Naive thymus-derived CD4-positive, alpha-beta T cell (primary cell): ENCODE measurements at regions of chr16 and their contacts with region 1.

Region 1: DNA sequence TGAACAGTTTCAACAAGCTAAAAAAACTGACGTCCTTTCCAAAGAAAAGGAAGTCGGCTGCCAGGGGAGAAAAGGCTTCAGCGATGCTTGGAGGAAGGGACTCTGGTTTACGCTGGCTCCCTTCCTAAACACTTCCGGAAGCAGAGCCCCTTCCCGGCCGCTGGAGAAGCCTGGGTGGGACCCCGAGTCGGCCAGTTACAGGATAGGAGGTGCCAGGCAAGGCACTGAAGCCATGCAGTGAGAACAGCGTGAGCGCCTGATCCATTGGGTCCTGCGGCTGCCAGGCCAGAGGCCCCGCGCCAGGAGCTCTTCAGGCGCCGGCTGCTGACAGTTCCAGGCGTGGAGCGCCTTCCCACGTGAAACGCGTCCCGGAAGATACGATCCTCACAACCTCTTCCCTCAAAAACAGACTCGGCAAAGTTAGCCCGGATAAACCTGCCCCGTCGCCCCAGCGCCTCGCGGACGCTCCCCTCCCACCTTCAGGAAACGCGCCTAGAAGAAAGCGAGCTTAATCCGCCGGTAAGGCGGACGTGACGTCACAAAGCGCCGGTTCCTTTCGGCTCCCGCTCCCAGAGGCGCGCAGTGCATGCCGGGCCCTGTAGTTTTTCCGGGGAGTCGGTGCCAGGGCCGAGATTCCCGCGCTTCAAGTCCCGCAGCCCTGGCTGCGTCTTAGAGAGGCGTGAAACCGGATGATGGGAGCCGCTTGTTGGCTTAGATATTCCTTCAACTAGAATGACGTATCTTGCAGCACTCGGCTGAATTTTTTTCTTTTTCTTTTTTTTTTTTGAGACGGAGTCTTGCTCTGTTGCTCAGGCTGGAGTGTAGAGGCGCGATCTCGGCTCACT is at the start of gene ADAT1:
- DNase-seq: peak; percentile 91 to 99 (median 97)
- ATAC-seq: peak; percentile 97
- H3K4me3 ChIP-seq: peak within 1 kb of the TSS; percentile 80
- H3K4me3 Mint-ChIP-seq: peak within 1 kb of the TSS; percentile 91 to 99 (median 96)
- H3K27ac ChIP-seq: peak within 1 kb of the TSS; percentile 93
- H3K27ac Mint-ChIP-seq: peak within 1 kb of the TSS; percentile 92 to 99 (median 97)
- H3K4me1 ChIP-seq: peaks cover 30 to 49% of the 10 kb centered on the region in 2 donors
- H3K4me1 Mint-ChIP-seq: peaks cover 29 to 76% (median 52%) of the 10 kb centered on the region in 7 donors
- H3K27me3 ChIP-seq: no peaks in the 10 kb centered on the region
- H3K27me3 Mint-ChIP-seq: no peaks in the 10 kb centered on the region
- total RNA-seq, gene ADAT1: 41.3 to 69.4 (median 63.6) TPM

Region 2: GRCh38 chr16:74296432-74297144 is 1326.4 kb before region 1 on chr16 and contains the start of gene PSMD7:
- CTCF ChIA-PET with region 1: no interaction called
- POLR2A ChIA-PET with region 1: no interaction called
- intact Hi-C with region 1: loop called in 1 of 2 experiments (anchors 5 kb)
- DNase-seq: peak; percentile 82 to 93 (median 90)
- ATAC-seq: peak; percentile 96
- H3K4me3 ChIP-seq: peak within 1 kb of the TSS; percentile 86
- H3K4me3 Mint-ChIP-seq: peak within 1 kb of the TSS; percentile 89 to 99 (median 96)
- H3K27ac ChIP-seq: peak within 1 kb of the TSS; percentile 96
- H3K27ac Mint-ChIP-seq: peak within 1 kb of the TSS; percentile 93 to 100 (median 98)
- H3K4me1 ChIP-seq: peaks cover 22 to 25% of the 10 kb centered on the region in 2 donors
- H3K4me1 Mint-ChIP-seq: peaks cover 21 to 52% (median 38%) of the 10 kb centered on the region in 7 donors
- H3K27me3 ChIP-seq: no peaks in the 10 kb centered on the region
- H3K27me3 Mint-ChIP-seq: no peaks in the 10 kb centered on the region
- total RNA-seq, gene PSMD7: 61.1 to 107 (median 71.3) TPM

Region 3: DNA sequence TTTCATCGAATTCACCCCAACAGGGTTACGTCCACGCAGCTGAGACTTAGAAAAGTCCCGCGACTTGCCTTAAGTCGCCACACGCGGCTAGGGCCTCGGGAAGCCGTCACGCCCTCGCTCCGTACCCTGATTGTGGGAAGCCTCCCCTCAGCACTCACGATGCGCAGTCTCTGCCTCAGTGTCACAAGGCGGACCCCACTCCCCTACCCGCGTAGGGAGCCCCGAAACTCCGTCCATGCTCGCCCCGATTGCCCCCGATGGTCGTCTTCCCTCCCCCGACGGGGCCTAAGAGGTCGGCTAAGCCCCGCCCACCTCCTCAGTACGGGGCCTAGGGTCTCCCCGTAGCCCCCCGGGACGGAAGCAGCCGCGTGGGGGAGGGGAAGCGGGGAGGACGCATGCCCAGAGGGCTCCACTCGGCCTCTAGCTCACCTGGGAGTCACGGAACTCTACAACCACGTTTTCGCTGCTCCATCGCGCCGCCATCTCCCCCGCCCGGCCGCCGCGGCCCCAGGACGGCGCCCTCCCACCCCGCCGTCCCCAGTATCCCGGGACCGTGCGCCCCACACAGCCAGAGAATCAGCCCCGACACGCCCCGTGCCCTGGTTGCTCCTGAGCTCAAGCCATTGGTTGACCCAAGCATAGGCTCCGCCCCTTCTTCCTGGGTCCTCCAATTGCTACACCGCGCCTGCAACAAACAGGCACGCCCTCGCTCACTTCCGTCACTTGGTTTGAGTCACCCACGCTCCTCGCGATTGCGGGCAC is 638.3 kb before region 1 on chr16 and contains the start of gene WDR59:
- CTCF ChIA-PET with region 1: no interaction called
- POLR2A ChIA-PET with region 1: no interaction called
- intact Hi-C with region 1: loop called (anchors 1 to 10 kb)
- DNase-seq: peak; percentile 87 to 99 (median 98)
- ATAC-seq: peak; percentile 100
- H3K4me3 ChIP-seq: peak within 1 kb of the TSS; percentile 98
- H3K4me3 Mint-ChIP-seq: peak within 1 kb of the TSS; percentile 90 to 98 (median 95)
- H3K27ac ChIP-seq: peak within 1 kb of the TSS; percentile 86
- H3K27ac Mint-ChIP-seq: peak within 1 kb of the TSS; percentile 72 to 96 (median 92)
- H3K4me1 ChIP-seq: peaks cover 5 to 6% of the 10 kb centered on the region in 2 donors
- H3K4me1 Mint-ChIP-seq: peaks cover 0 to 27% (median 23%) of the 10 kb centered on the region in 7 donors
- H3K27me3 ChIP-seq: no peaks in the 10 kb centered on the region
- H3K27me3 Mint-ChIP-seq: no peaks in the 10 kb centered on the region
- total RNA-seq, gene WDR59: 82.7 to 130 (median 84.7) TPM

Region 4: GRCh38 chr16:75471723-75472633 is 151.0 kb before region 1 on chr16:
- CTCF ChIA-PET with region 1: no interaction called
- POLR2A ChIA-PET with region 1: no interaction called
- intact Hi-C with region 1: loop called in 1 of 2 experiments (anchors 1 kb)
- DNase-seq: peak in 6 of 9 donors; percentile 15 to 48 (median 38)
- ATAC-seq: peak; percentile 91
- H3K4me3 ChIP-seq: no peak overlapping the region
- H3K4me3 Mint-ChIP-seq: no peak overlapping the region
- H3K27ac ChIP-seq: no peak overlapping the region
- H3K27ac Mint-ChIP-seq: peak overlapping the region in 1 of 9 donors; percentile 81
- H3K4me1 ChIP-seq: no peaks in the 10 kb centered on the region
- H3K4me1 Mint-ChIP-seq: peaks cover 0 to 6% (median 4%) of the 10 kb centered on the region in 7 donors
- H3K27me3 ChIP-seq: no peaks in the 10 kb centered on the region
- H3K27me3 Mint-ChIP-seq: peaks cover 0 to 5% (median 0%) of the 10 kb centered on the region in 5 donors

Region 5: DNA sequence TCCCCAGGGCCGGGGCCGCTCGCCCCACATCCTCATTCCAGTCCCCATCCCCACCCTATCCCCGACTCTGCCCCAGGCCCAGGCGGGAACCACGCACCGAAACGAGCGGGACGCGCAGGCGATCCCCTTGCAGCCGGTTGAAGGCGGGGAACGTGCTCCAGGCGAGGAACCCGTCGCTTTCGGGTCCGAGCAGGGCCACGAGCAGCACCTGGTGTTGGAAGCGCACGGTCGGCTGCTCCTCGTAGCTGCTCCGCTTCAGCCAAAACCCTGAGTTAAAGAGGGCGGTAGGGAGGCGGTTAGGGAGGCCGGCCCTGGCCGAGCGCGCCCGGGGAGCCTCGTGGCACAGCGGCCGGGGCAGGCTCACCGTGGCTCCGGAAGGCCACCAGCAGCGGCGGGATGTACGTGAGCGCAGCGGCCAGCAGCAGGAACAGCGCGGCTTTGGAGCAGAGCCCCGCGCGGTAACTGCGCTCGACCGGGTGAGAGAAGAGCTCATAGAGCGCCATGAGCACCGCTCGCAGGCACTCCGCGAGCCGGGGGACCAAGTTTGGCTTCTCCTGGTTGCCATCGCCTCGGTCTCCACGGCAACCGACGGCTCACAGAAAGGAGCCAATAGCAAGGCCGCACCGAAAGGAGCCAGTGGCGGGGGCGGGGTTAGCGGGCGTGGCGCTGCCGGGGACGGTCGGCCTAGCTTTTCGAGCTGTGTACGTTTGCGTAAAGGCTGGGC is 67.1 kb before region 1 on chr16 and contains the start of gene TMEM231:
- CTCF ChIA-PET with region 1: no interaction called
- POLR2A ChIA-PET with region 1: interaction called, 10 read pairs
- intact Hi-C with region 1: loop called (anchors 1 to 2 kb)
- DNase-seq: peak; percentile 91 to 97 (median 93)
- ATAC-seq: peak; percentile 98
- H3K4me3 ChIP-seq: peak within 1 kb of the TSS; percentile 84
- H3K4me3 Mint-ChIP-seq: peak within 1 kb of the TSS; percentile 74 to 93 (median 88)
- H3K27ac ChIP-seq: peak within 1 kb of the TSS; percentile 66
- H3K27ac Mint-ChIP-seq: peak within 1 kb of the TSS; percentile 81 to 97 (median 89)
- H3K4me1 ChIP-seq: peaks cover 10% of the 10 kb centered on the region in 2 donors
- H3K4me1 Mint-ChIP-seq: peaks cover 5 to 14% (median 10%) of the 10 kb centered on the region in 7 donors
- H3K27me3 ChIP-seq: no peaks in the 10 kb centered on the region
- H3K27me3 Mint-ChIP-seq: peaks cover 0 to 33% (median 5%) of the 10 kb centered on the region in 5 donors
- total RNA-seq, gene TMEM231: 1.5 to 3.9 (median 3.4) TPM

Region 6: GRCh38 chr16:75764154-75764768 is 141.3 kb after region 1 on chr16:
- CTCF ChIA-PET with region 1: interaction called, 4 read pairs
- POLR2A ChIA-PET with region 1: no interaction called
- intact Hi-C with region 1: loop called (anchors 1 to 2 kb)
- DNase-seq: peak in 8 of 9 donors; percentile 37 to 72 (median 63)
- ATAC-seq: peak; percentile 98
- H3K4me3 ChIP-seq: no peak overlapping the region
- H3K4me3 Mint-ChIP-seq: no peak overlapping the region
- H3K27ac ChIP-seq: no peak overlapping the region
- H3K27ac Mint-ChIP-seq: peak overlapping the region in 5 of 9 donors; percentile 8 to 55 (median 19)
- H3K4me1 ChIP-seq: no peaks in the 10 kb centered on the region
- H3K4me1 Mint-ChIP-seq: peaks cover 0 to 5% (median 0%) of the 10 kb centered on the region in 7 donors
- H3K27me3 ChIP-seq: no peaks in the 10 kb centered on the region
- H3K27me3 Mint-ChIP-seq: peaks cover 0 to 20% (median 13%) of the 10 kb centered on the region in 5 donors